ENCODE measurements at regions of chr1 and their contacts with region 1.

Region 1: DNA sequence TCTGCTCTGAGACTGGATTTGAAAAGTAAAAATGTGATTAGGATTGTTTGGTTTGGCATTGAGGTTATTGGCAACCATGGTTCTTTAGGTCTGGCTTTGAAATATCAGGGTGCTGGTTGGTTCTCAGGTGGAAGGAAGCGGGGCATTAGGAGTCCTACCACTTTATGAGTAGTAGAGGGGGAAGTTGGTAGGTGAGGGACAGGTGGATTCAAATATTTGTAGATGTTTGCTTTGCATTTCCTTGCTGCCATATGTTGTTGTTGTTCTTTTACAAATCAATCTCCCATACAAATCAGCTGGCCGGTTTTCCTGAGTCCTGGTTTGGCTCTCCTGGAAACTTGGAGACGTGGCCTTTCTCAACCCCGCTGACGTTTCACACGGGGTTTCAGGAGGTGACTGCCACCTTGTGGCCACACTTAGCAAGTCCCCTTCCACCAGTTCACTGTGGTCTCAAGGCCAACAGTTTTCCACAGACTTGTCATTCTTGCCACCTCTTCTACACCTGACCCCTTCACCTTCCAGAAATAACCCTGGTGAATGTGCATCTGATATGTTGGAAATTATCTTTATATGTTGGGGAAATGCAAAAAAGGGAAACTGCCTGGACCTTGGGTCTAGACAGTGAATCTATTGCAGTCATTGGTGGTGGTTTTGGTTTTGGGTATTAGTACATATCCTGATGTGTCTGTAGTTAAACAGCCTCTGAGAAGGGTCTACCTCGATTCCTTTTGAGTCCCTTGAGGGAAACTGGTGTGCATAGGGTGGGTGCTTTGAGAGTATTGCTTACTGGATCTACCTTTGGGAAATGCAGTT is 127.0 kb upstream of the KIAA0040 start:
- DNase-seq: peak; percentile 87
- ATAC-seq: peak; percentile 81

Region 2: DNA sequence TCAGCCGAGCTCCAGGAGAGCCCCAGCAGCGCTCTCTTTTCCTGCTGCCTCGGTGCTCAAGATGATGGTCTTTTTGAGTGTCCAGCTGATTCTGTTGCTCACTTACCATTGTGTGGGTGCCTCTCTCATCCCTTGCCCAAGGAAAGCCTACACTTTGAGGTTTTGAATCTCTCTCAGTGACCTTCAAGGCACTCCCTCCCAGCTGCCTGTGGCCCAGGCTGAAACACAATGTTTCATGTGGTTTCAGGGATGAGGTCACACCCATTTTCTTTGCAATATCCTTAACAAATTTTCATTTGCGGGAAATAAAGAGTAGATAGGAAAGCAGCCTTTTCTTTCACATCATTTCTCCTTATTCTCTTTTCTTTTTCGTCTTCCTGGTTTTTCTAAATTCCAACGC is 283.8 kb before region 1 on chr1:
- intact Hi-C with region 1: loop called (anchors 5 kb)
- DNase-seq: no peak
- ATAC-seq: no peak

Region 3: DNA sequence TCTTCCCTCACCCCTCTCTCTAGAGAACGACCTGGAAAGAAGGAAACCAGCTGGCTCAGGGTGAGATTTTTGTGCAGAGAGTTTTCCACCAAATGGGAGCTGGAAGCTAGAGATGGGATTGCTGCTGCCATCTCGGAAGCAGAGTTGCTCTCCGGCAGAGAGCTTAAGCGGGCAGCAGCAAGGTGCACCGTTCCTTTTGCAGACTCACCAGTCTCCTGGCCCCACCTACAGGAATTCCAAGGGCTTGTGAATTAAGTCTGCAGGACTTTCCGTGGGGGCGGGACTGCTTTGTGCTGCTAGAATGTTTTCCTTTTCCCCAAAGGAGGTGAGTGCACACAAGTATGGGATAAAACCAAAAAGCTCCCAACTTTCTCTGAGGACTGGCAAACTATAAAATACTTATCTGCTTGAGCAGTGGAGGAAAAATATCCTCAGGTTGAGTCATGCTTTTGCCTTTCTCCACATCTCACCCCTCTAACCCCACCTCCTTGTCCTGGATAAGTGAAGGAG is 97.9 kb before region 1 on chr1:
- intact Hi-C with region 1: loop called (anchors 5 kb)
- DNase-seq: no peak
- ATAC-seq: peak; percentile 48

Region 4: DNA sequence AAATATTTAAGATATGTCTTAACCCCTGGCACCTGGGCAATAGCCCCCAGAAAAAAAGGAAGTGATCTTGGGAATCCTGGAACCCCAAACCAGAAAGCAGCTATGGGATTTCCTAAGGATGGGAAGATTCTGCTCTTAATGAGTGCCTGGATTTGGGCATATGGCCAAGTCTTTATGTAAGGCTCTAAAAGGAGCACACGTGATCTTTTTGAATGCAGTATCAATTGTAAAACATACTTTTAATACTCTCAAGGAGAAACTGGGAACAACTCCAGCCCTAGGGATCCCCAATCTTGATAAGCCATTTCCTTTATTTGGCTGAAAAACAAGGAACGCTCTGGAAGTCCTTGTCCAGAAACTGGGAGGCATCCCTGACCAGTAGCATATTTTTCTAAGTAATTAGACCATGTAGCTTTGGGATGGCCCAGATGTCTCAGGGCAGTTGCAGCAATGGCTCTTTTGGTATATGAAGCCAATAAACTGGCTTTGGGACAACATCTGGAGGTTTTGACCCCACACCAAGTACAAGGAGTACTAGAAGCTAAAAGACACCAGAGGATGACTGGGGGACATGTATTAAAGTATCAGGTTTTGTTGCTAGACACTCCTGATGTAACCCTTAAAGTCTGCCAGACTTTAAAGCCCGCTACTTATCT is 46.1 kb before region 1 on chr1:
- intact Hi-C with region 1: loop called (anchors 2 kb)
- DNase-seq: no peak
- ATAC-seq: peak; percentile 83

Measured in Right ventricle myocardium inferior (tissue), 1 donor.